Head of caudate nucleus (tissue), 42 donors: ENCODE measurements at regions of chr4 and their contacts with region 1.

Region 1: GRCh38 chr4:154622416-154622997 is 10.1 kb upstream of the FGG start:
- DNase-seq: peak in 22 of 42 donors; percentile 14 to 72 (median 36)

Region 2: GRCh38 chr4:154551872-154552686 is 70.4 kb before region 1 on chr4:
- intact Hi-C with region 1: loop called (anchors 5 kb)
- DNase-seq: peak; percentile 66 to 92 (median 82)

Region 3: DNA sequence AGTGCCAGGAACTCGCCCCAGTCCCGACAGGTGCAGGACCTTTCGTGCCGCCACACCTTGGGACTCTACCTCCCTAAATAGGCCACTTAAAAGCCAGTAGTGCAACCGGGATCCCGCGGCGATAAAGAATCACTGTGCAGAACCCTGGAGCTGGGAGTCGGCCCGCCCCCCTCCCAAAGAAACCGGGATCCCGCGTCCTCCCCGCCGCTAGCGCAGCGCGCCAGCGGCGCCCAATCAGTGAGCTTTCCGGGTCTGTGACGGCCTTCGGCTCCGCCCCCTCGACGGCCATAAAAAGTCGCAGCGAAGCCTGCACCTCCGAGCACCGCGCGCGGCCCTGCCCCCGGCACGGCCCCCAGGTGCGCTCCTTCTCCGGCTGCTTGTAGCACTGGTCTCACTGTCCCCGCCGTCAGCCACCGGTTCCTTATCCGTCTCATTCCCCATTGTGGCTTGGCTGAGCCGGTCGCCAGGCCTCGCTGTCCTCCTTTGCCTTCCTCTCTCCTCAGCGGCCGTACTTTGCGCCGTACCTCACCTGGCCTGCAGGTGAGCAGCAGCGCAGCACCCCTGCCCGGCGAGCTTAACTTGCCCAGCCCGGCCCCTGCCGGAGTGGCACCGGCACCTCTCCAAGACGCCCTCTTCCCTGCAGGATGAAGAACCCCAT is 121.3 kb after region 1 on chr4 and contains the start of gene LRAT:
- intact Hi-C with region 1: no loop called
- DNase-seq: peak; percentile 12 to 78 (median 59)